Activated CD8-positive, alpha-beta T cell treated with anti-CD3 and anti-CD28 coated beads for 36 hours (primary cell): ENCODE measurements at regions of chr4 and their contacts with region 1.

Region 1: DNA sequence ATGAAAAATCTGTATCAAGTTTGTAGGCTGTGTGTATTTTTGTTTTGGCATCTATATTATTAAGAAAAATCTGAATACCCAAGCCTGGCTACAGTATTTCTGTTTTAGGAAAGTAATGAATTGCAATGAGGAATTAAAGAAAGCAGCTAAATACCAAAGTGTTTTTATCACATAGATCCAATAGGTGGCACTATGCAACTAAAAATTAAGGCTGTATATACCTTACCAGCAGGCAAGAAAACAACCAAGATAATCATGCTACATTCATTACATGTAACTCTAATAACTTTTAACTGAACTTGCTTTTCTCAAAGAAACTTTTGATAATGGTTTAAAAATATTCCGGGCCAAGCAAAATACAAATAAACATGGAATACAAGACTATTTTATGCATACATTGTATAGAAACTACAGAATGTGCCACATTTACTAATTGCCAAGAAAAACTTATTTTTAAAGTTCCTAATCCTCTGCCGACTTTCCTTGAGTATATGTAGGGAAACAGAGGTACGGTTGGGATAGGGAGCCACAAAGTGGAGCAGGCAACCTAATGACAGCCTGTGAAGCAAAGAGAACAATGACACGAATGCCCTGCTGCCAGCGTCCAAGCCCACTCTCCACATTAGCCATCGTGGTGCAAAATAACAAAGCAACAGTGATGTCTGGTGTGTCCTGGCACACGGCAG is 63.7 kb downstream of the SEC24D start:
- DNase-seq: no peak
- ATAC-seq: peak; percentile 75
- H3K4me3 Mint-ChIP-seq: no peak overlapping the region
- H3K27ac Mint-ChIP-seq: no peak overlapping the region
- H3K4me1 Mint-ChIP-seq: no peaks in the 10 kb centered on the region
- H3K27me3 Mint-ChIP-seq: no peaks in the 10 kb centered on the region
- CTCF ChIP-seq: peak; percentile 63

Region 2: GRCh38 chr4:118684873-118685811 is 87.1 kb before region 1 on chr4 and contains the start of gene METTL14:
- CTCF ChIA-PET with region 1: no interaction called
- POLR2A ChIA-PET with region 1: no interaction called
- intact Hi-C with region 1: no loop called
- DNase-seq: peak; percentile 93
- ATAC-seq: peak; percentile 98
- H3K4me3 Mint-ChIP-seq: peak within 1 kb of the TSS; percentile 98
- H3K27ac Mint-ChIP-seq: peak within 1 kb of the TSS; percentile 96
- H3K4me1 Mint-ChIP-seq: peaks cover 24% of the 10 kb centered on the region
- H3K27me3 Mint-ChIP-seq: no peaks in the 10 kb centered on the region
- CTCF ChIP-seq: no peak
- total RNA-seq, gene METTL14: 39.3 to 46.1 TPM

Region 3: GRCh38 chr4:118836301-118837120 is 64.3 kb after region 1 on chr4:
- CTCF ChIA-PET with region 1: interaction called, 30 read pairs
- POLR2A ChIA-PET with region 1: no interaction called
- intact Hi-C with region 1: loop called (anchors 1 kb)
- DNase-seq: peak; percentile 69
- ATAC-seq: peak; percentile 70
- H3K4me3 Mint-ChIP-seq: peak overlapping the region; percentile 87
- H3K27ac Mint-ChIP-seq: peak overlapping the region; percentile 96
- H3K4me1 Mint-ChIP-seq: peaks cover 18% of the 10 kb centered on the region
- H3K27me3 Mint-ChIP-seq: no peaks in the 10 kb centered on the region
- CTCF ChIP-seq: no peak

Region 4: DNA sequence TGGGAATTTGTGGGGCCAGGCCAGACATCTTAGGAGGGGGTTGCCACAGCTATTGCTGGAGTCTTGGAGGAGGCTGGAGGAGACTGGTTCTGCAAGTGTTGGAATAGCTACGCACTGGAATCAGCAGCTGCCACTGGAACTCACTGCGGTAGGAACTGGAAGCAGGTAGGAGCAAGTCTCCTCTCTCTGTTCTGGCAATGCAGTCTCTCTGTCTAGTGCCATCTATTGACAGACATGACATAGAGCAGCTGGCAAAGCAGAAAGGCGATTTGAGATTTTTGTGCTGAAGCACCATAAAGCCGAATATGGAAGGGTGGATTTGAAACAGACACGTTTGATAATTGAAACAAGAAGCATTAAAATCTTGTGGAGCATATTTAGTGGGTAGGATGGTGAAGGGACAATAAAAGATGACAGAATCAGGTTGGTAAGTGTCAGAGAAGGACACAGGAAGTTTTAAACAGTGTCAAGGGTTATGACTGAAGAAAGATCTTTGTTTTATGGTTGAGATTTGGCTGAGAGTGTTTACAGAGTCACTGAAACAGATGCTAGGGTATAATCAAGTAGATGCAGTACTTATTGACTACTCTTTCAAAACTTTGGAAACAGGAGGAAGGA is 93.0 kb after region 1 on chr4:
- CTCF ChIA-PET with region 1: interaction called, 10 read pairs
- POLR2A ChIA-PET with region 1: no interaction called
- intact Hi-C with region 1: no loop called
- DNase-seq: peak; percentile 13
- ATAC-seq: peak; percentile 37
- H3K4me3 Mint-ChIP-seq: no peak overlapping the region
- H3K27ac Mint-ChIP-seq: no peak overlapping the region
- H3K4me1 Mint-ChIP-seq: peaks cover 6% of the 10 kb centered on the region
- H3K27me3 Mint-ChIP-seq: no peaks in the 10 kb centered on the region
- CTCF ChIP-seq: peak; percentile 62

Region 5: GRCh38 chr4:118888666-118889311 is 116.6 kb after region 1 on chr4 and contains the start of gene SYNPO2:
- CTCF ChIA-PET with region 1: interaction called, 35 read pairs
- POLR2A ChIA-PET with region 1: no interaction called
- intact Hi-C with region 1: loop called (anchors 2 kb)
- DNase-seq: peak; percentile 59
- ATAC-seq: peak; percentile 93
- H3K4me3 Mint-ChIP-seq: peak within 1 kb of the TSS; percentile 76
- H3K27ac Mint-ChIP-seq: no peak within 1 kb of the TSS
- H3K4me1 Mint-ChIP-seq: peaks cover 14% of the 10 kb centered on the region
- H3K27me3 Mint-ChIP-seq: peaks cover 30% of the 10 kb centered on the region
- CTCF ChIP-seq: no peak
- total RNA-seq, gene SYNPO2: 0.13 to 0.18 TPM

Region 6: DNA sequence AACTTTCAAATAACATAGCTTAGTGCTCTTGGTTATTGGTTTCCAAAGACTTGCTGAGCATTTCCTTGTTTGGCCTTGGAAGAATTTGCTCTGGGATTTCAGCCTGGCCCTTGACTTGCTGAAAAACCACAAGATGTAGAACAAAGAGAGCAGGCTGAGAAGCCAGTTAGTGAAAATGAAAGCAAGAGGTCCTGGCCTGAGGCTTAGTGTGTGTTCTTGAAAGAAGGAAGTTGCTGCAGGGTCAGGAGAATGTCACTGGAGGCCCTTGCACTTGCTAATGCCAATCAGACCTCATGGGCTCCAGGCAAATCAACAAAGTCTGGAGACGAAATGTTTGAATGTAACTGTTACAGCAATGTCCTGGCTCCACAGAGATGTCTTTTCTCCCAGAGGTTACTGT is 195.8 kb after region 1 on chr4:
- CTCF ChIA-PET with region 1: interaction called, 10 read pairs
- POLR2A ChIA-PET with region 1: no interaction called
- intact Hi-C with region 1: loop called (anchors 10 kb)
- DNase-seq: peak; percentile 12
- ATAC-seq: peak; percentile 79
- H3K4me3 Mint-ChIP-seq: no peak overlapping the region
- H3K27ac Mint-ChIP-seq: peak overlapping the region; percentile 36
- H3K4me1 Mint-ChIP-seq: peaks cover 6% of the 10 kb centered on the region
- H3K27me3 Mint-ChIP-seq: no peaks in the 10 kb centered on the region
- CTCF ChIP-seq: no peak

Region 7: GRCh38 chr4:119570401-119570800 is 798.2 kb after region 1 on chr4:
- CTCF ChIA-PET with region 1: no interaction called
- POLR2A ChIA-PET with region 1: no interaction called
- intact Hi-C with region 1: no loop called
- DNase-seq: no peak
- ATAC-seq: no peak
- H3K4me3 Mint-ChIP-seq: no peak overlapping the region
- H3K27ac Mint-ChIP-seq: no peak overlapping the region
- H3K4me1 Mint-ChIP-seq: no peaks in the 10 kb centered on the region
- H3K27me3 Mint-ChIP-seq: no peaks in the 10 kb centered on the region
- CTCF ChIP-seq: no peak